Activated CD4-positive, alpha-beta T cell treated with anti-CD3 and anti-CD28 coated beads for 36 hours (primary cell): ENCODE measurements at regions of chr10 and their contacts with region 1.

Region 1: DNA sequence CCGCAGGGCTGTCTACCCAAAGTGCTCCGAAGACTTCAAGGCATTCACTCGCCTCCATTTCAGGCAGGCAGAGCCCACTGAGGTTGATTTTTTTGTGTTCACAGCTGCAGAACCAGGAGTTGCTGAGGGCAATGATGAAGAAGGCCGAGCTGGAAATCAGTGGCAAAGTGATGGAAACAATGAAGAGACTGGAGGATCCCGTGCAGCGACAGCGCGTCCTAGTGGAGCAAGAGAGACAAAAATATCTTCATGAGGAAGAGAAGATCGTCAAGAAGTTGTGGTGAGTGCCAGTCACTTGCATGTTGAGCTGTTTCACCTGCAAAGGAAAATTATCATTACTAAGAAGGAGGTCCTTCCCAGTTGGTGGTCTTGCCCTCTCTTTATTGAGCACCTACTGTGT is 210.5 kb downstream of the ARHGAP21 start:
- DNase-seq: peak; percentile 38
- ATAC-seq: no peak
- H3K4me3 Mint-ChIP-seq: no peak overlapping the region
- H3K27ac Mint-ChIP-seq: no peak overlapping the region
- H3K4me1 Mint-ChIP-seq: no peaks in the 10 kb centered on the region
- H3K27me3 Mint-ChIP-seq: peaks cover 4% of the 10 kb centered on the region

Region 2: GRCh38 chr10:24318517-24318916 is 194.6 kb before region 1 on chr10:
- CTCF ChIA-PET with region 1: no interaction called
- POLR2A ChIA-PET with region 1: no interaction called
- intact Hi-C with region 1: loop called in 1 of 2 experiments (anchors 5 kb)
- DNase-seq: no peak
- ATAC-seq: no peak
- H3K4me3 Mint-ChIP-seq: no peak overlapping the region
- H3K27ac Mint-ChIP-seq: no peak overlapping the region
- H3K4me1 Mint-ChIP-seq: no peaks in the 10 kb centered on the region
- H3K27me3 Mint-ChIP-seq: peaks cover 8% of the 10 kb centered on the region